Activated T-helper 1 cell treated with anti-CD3 and anti-CD28 coated beads, Interleukin-12 subunit alpha, Interleukin-12 subunit beta, Interleukin-2, Interleukin-4 antibody, amounts not matched to agents 30 ng/mL and 10 ng/mL and 1 ng/mL, durations not matched to agents 14 hours and 24 hours and 36 hours (primary cell): ENCODE measurements at regions of chr2 and their contacts with region 1.

Region 1: GRCh38 chr2:46632349-46632748 is 153.0 kb downstream of the TMEM247 start:
- DNase-seq: no peak
- H3K4me3 Mint-ChIP-seq: no peak overlapping the region
- H3K27ac Mint-ChIP-seq: no peak overlapping the region
- H3K4me1 Mint-ChIP-seq: peaks cover 8% of the 10 kb centered on the region
- H3K27me3 Mint-ChIP-seq: no peaks in the 10 kb centered on the region

Region 2: GRCh38 chr2:46547223-46548102 is 84.9 kb before region 1 on chr2:
- intact Hi-C with region 1: no loop called
- DNase-seq: no peak
- H3K4me3 Mint-ChIP-seq: no peak overlapping the region
- H3K27ac Mint-ChIP-seq: no peak overlapping the region
- H3K4me1 Mint-ChIP-seq: peaks cover 31% of the 10 kb centered on the region
- H3K27me3 Mint-ChIP-seq: no peaks in the 10 kb centered on the region

Region 3: DNA sequence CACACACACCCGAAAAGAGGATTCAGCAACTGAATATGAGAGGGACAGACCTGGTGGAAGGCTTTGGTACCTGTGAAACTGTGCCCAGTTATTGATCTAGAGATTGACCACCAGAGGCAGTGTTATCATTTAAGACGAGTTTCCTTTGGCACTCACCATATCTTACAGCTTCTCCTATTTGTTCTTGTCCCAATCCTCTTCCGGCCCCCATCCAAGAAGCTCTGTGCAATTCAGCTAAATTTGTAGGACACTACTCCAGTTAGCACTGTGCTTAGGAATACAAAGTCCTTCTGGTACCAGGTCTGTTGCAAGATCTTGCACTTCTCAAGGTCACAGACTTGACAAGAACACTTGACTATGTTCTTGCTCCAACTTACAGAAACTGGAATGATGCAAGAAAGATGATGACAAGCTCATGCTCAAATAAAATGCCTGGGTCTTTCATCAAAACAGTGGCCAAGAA is 24.7 kb after region 1 on chr2:
- intact Hi-C with region 1: no loop called
- DNase-seq: no peak
- H3K4me3 Mint-ChIP-seq: no peak overlapping the region
- H3K27ac Mint-ChIP-seq: no peak overlapping the region
- H3K4me1 Mint-ChIP-seq: no peaks in the 10 kb centered on the region
- H3K27me3 Mint-ChIP-seq: peaks cover 30% of the 10 kb centered on the region

Region 4: DNA sequence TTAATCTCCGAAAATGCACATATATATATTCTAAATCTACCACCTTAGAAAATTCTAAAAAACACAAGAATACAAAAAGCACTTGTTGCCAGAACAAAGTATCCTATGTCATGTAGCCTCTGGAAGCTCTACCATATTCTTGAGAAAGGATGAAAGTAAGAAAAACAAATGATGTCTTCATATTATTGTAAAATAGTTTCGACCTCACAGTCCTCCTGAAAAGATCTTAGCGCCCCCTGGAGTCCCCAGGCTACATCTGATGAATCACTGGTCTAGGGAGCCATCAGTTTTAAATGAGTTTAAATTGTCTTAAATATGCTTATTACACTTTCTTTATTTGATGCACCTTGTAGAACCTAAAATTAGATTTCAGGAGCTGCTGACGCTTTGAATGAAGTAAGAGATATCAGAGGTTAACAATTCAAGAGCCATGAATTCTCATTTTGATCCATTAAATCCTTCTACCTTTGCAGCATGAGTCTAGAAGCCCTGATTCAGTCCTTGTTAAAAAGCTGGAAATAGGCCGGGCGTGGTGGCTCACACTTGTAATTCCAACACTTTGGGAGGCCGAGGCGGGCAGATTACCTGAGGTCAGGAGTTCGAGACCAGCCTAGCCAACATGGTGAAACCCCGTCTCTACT is 144.5 kb after region 1 on chr2:
- intact Hi-C with region 1: loop called (anchors 1 kb)
- DNase-seq: peak; percentile 5
- H3K4me3 Mint-ChIP-seq: no peak overlapping the region
- H3K27ac Mint-ChIP-seq: no peak overlapping the region
- H3K4me1 Mint-ChIP-seq: no peaks in the 10 kb centered on the region
- H3K27me3 Mint-ChIP-seq: peaks cover 9% of the 10 kb centered on the region

Region 5: DNA sequence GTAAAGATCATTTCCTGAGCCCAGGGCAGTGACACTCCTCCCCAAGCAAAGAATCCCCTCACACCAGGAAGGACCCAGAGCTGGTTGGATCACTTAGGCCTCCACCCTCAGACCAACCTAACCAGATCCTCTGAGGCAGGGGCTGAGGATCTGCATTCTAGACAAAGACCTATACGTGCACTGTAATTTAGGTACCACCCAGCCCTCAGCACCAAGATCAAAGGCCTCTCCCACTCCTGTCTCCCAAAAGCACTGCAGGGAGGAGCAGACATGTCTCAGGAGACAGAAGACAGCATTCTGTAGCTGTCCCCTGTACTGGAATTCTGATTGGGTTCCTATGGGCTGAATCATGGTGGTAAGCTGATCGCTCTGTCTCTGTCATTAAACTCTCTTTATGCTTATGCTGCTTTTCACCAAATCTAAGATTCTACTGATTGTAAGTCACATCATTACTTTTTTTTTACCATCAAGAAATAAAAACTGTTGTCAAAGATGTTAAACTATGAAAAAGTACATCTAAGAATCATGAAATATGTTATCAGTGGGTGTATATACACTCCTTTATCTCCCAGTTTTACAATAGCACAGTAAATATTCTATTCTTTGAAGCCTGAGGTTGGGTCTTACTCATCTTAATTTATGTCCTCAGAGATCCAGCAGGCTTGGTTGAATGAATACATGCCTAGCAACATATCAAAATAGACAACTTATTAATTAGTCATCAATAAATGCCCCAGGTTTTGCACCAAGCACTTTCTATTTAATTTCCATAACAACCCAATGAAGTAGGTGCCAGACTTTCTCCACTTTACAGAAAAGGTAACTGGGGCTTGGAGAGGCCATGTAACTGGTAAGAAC is 254.9 kb after region 1 on chr2:
- intact Hi-C with region 1: loop called (anchors 1 kb)
- DNase-seq: no peak
- H3K4me3 Mint-ChIP-seq: no peak overlapping the region
- H3K27ac Mint-ChIP-seq: no peak overlapping the region
- H3K4me1 Mint-ChIP-seq: peaks cover 10% of the 10 kb centered on the region
- H3K27me3 Mint-ChIP-seq: peaks cover 16% of the 10 kb centered on the region

Region 6: GRCh38 chr2:47323009-47323821 is 690.9 kb after region 1 on chr2:
- intact Hi-C with region 1: loop called (anchors 1 kb)
- DNase-seq: peak; percentile 49
- H3K4me3 Mint-ChIP-seq: no peak overlapping the region
- H3K27ac Mint-ChIP-seq: no peak overlapping the region
- H3K4me1 Mint-ChIP-seq: no peaks in the 10 kb centered on the region
- H3K27me3 Mint-ChIP-seq: peaks cover 14% of the 10 kb centered on the region